Posterior vena cava (tissue), 2 donors: ENCODE measurements at regions of chr3 and their contacts with region 1.

Region 1: GRCh38 chr3:118587037-118587741 is 447.5 kb downstream of the IGSF11 start:
- DNase-seq: no peak

Region 2: GRCh38 chr3:118544458-118544857 is 42.7 kb before region 1 on chr3:
- intact Hi-C with region 1: no loop called
- DNase-seq: no peak

Region 3: GRCh38 chr3:118573921-118574320 is 13.3 kb before region 1 on chr3:
- intact Hi-C with region 1: no loop called
- DNase-seq: no peak

Region 4: DNA sequence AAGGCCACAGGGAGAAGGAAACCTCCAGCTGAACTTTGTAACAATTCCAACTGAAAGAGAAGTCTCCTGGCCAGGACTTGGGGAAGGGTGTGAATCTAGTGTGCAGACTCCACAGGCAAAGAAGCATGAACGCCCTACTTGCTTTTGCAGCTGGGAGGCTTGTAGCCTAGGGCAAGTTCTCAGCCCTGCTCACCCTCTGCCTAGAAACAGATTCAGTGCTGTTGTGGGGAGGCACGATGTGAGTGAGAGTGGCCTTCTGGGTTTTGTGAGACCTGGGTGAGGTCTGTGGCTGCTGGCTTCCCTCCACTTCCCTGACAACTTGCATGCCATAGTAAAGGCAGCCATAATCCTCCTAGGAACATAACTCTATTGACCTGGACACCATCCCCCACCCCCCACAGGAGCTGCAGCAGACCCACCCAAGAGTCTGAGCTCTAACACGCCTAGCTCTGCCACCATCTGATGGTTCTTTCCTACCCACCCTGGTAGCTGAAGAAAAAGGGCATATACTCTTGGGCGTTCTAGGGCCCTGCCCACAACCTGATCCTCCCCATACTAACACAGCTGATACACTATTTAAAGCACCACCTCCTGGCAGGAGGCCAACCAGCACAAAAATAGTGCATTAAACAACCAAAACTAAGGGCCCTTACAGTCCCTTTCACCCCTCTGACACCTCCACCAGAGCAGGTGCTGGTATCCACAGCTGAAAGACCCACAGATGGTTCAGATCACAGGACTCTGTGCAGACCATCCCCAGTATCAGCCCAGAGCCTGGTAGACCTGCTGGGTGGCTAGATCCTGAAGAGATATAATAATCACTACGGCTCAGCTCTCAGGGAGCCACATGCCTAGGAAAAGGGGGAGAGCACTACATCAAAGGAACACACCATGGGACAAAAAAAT is 21.0 kb after region 1 on chr3:
- intact Hi-C with region 1: loop called in 1 of 2 experiments (anchors 1 kb)
- DNase-seq: peak; percentile 53

Region 5: GRCh38 chr3:118618247-118619040 is 31.3 kb after region 1 on chr3:
- intact Hi-C with region 1: no loop called
- DNase-seq: no peak

Region 6: DNA sequence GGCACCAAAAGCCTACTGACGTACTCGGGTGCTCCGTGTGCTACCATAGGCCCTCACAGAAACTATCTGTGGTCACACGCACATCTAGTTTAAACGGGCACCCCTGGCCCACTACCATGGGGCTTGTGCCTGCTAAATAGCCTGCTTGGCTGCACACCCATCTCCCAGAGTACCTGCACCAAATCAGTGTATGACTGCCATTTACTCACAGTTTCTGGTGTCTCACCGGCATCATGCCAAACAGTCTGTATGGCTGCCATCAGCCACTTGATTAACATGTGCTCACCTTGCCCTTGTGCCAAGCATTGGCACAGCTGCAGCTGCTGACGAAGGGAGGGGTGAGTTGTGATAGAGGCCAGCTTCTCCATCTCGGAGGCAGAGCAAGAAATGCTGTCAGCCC is 214.7 kb after region 1 on chr3:
- intact Hi-C with region 1: no loop called
- DNase-seq: no peak